Thyroid gland (tissue), 4 donors: ENCODE measurements at regions of chr12 and their contacts with region 1.

Region 1: DNA sequence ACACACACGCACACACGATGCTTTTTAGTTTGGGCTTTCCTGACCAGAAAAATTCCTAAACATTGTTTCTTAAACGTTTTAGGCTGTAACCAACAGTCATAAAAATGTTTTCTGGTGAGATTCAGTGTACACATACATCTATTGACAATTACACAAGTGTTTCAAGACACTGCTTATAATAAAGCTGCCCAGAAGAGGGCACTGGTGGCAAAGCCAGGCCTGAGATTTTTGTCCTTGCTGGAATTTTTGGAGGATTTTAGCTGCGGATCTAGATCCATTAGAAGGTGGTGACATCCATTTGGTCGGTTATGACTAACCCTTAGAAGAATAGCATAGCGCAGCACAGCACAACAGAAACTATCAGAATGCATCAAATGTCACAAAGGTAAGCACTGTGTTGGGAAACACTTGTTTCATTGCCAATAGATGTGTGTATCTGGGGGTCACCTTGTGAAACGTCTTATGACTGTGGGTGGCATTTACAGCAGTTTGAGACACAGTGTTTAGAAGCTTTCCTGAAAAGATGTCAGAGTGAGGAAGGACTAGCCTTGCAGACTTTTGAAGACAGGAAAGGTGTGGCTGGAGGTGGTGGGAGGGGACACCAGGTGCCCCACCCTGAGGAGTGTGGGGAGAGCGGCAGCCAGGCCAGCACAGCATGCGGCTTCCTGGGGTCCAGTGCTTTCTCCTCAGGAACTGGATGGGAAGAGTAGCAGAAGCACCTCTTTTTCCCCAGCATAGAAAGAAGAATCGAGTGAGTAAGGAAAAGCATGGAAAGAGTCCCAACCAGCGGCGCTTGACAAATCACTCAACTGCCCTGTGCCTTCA is 54.7 kb upstream of the FKBP4 start:
- DNase-seq: peak; percentile 32 to 38
- H3K4me3 ChIP-seq: no peak overlapping the region
- H3K27ac ChIP-seq: no peak overlapping the region
- H3K4me1 ChIP-seq: peaks cover 0 to 5% of the 10 kb centered on the region in 2 donors
- H3K27me3 ChIP-seq: no peaks in the 10 kb centered on the region
- CTCF ChIP-seq: peak in 5 of 6 experiments; percentile 52 to 84 (median 71)
- POLR2A ChIP-seq: no peak

Region 2: GRCh38 chr12:2550561-2551411 is 189.2 kb before region 1 on chr12:
- intact Hi-C with region 1: no loop called
- DNase-seq: no peak
- H3K4me3 ChIP-seq: no peak overlapping the region
- H3K27ac ChIP-seq: no peak overlapping the region
- H3K4me1 ChIP-seq: no peaks in the 10 kb centered on the region
- H3K27me3 ChIP-seq: no peaks in the 10 kb centered on the region
- CTCF ChIP-seq: no peak
- POLR2A ChIP-seq: no peak

Region 3: GRCh38 chr12:2783936-2784600 is 44.0 kb after region 1 on chr12:
- intact Hi-C with region 1: loop called (anchors 5 kb)
- DNase-seq: peak; percentile 91 to 92
- H3K4me3 ChIP-seq: no peak overlapping the region
- H3K27ac ChIP-seq: no peak overlapping the region
- H3K4me1 ChIP-seq: peaks cover 6 to 7% of the 10 kb centered on the region in 2 donors
- H3K27me3 ChIP-seq: no peaks in the 10 kb centered on the region
- CTCF ChIP-seq: peak; percentile 85 to 98 (median 94)
- POLR2A ChIP-seq: peak in 1 of 2 donors; percentile 10

Region 4: GRCh38 chr12:2826721-2827515 is 86.9 kb after region 1 on chr12:
- intact Hi-C with region 1: no loop called
- DNase-seq: no peak
- H3K4me3 ChIP-seq: no peak overlapping the region
- H3K27ac ChIP-seq: no peak overlapping the region
- H3K4me1 ChIP-seq: no peaks in the 10 kb centered on the region
- H3K27me3 ChIP-seq: no peaks in the 10 kb centered on the region
- CTCF ChIP-seq: no peak
- POLR2A ChIP-seq: no peak